ENCODE measurements at regions of chr2 and their contacts with region 1.

Region 1: GRCh38 chr2:15769676-15770547 is 170.4 kb upstream of the MYCN start:
- DNase-seq: no peak
- H3K4me3 ChIP-seq: no peak overlapping the region
- H3K4me3 Mint-ChIP-seq: no peak overlapping the region
- H3K27ac Mint-ChIP-seq: peak overlapping the region; percentile 53
- H3K4me1 ChIP-seq: peaks cover 44% of the 10 kb centered on the region
- H3K4me1 Mint-ChIP-seq: peaks cover 53% of the 10 kb centered on the region
- H3K27me3 ChIP-seq: no peaks in the 10 kb centered on the region
- H3K27me3 Mint-ChIP-seq: no peaks in the 10 kb centered on the region
- CTCF ChIP-seq: no peak

Region 2: DNA sequence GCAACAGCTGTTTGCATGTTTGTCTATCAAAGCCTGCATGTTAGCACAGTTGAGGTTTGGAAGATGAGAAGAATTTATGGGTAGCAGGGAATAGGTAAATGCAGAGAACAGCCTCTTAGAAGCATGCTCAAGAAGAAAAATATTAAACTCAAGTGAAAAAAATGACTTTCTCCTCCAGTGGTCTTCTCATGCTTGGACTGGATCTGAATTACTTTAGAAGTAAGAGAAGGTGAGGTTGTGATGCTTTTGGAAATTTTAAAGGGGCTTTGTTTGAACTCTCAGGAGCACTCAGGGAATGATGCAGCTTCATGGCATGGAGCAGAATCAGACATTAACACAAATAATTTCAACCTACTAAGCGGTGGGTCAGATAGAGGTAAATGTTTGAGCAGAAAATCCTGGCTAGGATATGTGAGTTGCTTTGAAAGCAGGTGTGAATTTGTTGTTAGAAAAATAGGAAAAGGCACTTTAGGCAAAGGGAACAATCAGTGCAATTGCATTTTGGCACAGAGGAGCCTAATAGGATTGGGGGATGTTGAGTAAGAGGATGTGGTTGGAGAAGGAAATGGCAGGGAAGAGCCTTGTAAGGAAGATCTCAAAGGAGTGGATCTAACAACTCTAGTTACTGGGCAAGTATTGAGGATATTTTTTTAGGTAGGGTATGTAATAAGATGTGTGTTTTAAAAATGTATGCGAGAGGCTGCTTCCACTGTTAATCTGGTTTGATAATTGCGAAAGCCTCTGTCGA is 101.9 kb before region 1 on chr2:
- CTCF ChIA-PET with region 1: no interaction called
- POLR2A ChIA-PET with region 1: no interaction called
- intact Hi-C with region 1: loop called (anchors 5 kb)
- DNase-seq: no peak
- H3K4me3 ChIP-seq: no peak overlapping the region
- H3K4me3 Mint-ChIP-seq: no peak overlapping the region
- H3K27ac Mint-ChIP-seq: no peak overlapping the region
- H3K4me1 ChIP-seq: peaks cover 27% of the 10 kb centered on the region; the same call in 1 of the 2 replicates
- H3K4me1 Mint-ChIP-seq: peaks cover 29% of the 10 kb centered on the region
- H3K27me3 ChIP-seq: no peaks in the 10 kb centered on the region
- H3K27me3 Mint-ChIP-seq: no peaks in the 10 kb centered on the region
- CTCF ChIP-seq: no peak

Region 3: DNA sequence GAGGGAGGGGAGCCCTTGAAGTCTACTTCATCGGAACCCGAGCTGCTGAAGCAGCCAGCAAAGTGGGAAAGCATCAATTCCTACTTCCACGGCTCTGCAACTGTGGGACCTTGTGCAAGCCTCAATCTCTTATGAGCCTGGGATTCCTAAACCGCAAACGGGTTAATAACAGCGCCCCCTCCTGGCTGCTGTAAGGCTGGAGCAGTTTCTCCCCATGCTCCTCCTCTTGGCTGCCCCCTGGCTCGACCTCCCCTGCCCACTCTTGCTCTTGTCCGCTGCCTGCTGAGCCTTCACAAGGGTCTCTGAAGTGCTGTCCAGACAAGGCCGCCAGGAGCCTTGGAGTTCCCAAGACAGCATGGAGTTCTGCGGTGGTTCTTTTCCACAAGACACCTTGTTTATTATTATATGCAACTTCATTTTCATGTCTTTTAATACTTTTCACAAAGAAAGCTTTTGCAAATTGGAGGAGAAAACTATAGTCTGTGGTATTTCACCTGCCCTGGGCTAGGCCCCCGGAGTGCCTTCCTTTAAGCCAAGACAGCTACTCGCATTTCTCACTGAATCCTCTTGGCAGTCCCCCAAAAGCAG is 21.1 kb before region 1 on chr2:
- CTCF ChIA-PET with region 1: no interaction called
- POLR2A ChIA-PET with region 1: no interaction called
- intact Hi-C with region 1: loop called (anchors 1 kb)
- DNase-seq: peak in 1 of 2 experiments; percentile 59
- H3K4me3 ChIP-seq: no peak overlapping the region
- H3K4me3 Mint-ChIP-seq: no peak overlapping the region
- H3K27ac Mint-ChIP-seq: peak overlapping the region; percentile 93
- H3K4me1 ChIP-seq: peaks cover 74% of the 10 kb centered on the region
- H3K4me1 Mint-ChIP-seq: peaks cover 48% of the 10 kb centered on the region
- H3K27me3 ChIP-seq: no peaks in the 10 kb centered on the region
- H3K27me3 Mint-ChIP-seq: no peaks in the 10 kb centered on the region
- CTCF ChIP-seq: peak; percentile 27 to 40

Region 4: GRCh38 chr2:16166431-16166981 is 396.6 kb after region 1 on chr2:
- CTCF ChIA-PET with region 1: no interaction called
- POLR2A ChIA-PET with region 1: no interaction called
- intact Hi-C with region 1: no loop called
- DNase-seq: no peak
- H3K4me3 ChIP-seq: no peak overlapping the region
- H3K4me3 Mint-ChIP-seq: no peak overlapping the region
- H3K27ac Mint-ChIP-seq: no peak overlapping the region
- H3K4me1 ChIP-seq: peaks cover 10% of the 10 kb centered on the region
- H3K4me1 Mint-ChIP-seq: peaks cover 8% of the 10 kb centered on the region
- H3K27me3 ChIP-seq: no peaks in the 10 kb centered on the region
- H3K27me3 Mint-ChIP-seq: no peaks in the 10 kb centered on the region
- CTCF ChIP-seq: no peak

Measured in Caco-2 (cell line).